ENCODE measurements at regions of chr2 and their contacts with region 1.

Region 1: DNA sequence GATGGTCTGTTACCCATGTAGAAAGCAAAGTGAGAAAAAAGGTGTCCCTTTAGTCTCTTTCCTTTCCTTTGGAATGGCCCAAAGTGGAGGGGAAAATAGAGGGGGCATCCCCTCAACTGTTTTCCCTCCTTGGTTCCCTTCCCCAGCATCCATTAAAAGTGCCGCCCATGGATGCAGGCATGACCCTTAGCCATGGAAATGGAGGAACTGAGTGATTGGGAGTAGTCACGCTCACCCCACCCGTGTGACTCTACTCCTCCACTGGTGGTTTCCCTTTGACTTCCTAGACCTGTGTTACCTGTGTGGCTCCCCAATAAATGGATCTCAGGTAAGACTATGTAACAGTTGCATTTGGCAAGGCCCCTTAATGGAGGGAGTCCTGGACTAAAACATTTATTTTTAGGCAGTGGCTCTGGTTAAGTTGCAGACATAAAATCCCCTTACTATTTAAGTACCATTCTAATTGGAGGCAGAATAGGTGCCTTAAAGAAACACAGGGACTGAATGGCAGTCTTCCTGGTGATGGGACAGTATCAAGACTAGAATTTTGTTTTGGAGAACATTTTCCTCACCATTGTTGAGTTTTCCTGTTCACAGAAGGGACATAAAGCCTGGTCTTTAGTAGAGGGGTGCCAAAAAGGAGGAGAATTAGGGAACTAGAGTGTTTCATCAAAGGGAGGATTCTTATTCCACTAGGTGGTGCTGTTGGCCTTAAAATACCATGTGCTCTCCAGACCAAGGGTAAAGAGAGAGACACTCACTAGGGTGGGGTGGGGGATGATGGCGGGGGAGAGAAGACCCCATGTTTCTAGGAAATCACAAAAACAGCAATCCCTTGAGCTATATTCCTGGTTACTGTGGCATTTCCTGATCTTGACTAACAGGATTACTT is 25.7 kb upstream of the PLA2R1 start:
- DNase-seq: peak; percentile 35 to 62
- ATAC-seq: peak; percentile 92 to 93
- H3K4me3 ChIP-seq: no peak overlapping the region
- H3K27ac ChIP-seq: peak overlapping the region; percentile 0 to 67; a peak in 3 of 6 replicates
- H3K4me1 ChIP-seq: peaks cover 10% of the 10 kb centered on the region
- CTCF ChIP-seq: peak; percentile 86
- EP300 ChIP-seq: no peak
- POLR2A ChIP-seq: no peak
- RAD21 ChIP-seq: peak; percentile 90 to 92

Region 2: DNA sequence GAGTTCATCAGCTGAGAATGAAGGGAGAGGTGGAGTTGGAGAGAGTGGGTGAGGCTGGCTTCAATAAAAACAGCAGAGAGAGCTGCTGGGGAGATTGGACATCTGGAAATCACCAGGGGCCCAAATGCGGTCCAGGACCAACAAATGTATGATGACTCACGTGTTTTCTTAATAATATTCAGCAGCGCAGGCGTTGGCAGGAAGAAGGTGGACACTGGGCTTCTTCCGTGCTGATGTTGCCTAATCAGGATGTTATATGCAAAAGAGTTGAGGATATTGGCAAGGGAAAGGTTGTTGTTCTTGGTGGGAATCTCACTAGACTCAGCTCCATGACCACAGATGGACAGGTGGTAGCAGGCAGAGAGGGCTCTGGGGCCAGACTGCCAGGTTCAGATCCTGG is 12.9 kb before region 1 on chr2:
- CTCF ChIA-PET with region 1: interaction called, 28 read pairs
- POLR2A ChIA-PET with region 1: no interaction called
- DNase-seq: peak in 1 of 2 experiments; percentile 13
- ATAC-seq: peak in 1 of 2 experiments; percentile 12; a peak in 1 of 6 replicates
- H3K4me3 ChIP-seq: no peak overlapping the region
- H3K27ac ChIP-seq: no peak overlapping the region
- H3K4me1 ChIP-seq: peaks cover 14% of the 10 kb centered on the region; the same call in 2 of the 3 replicates
- CTCF ChIP-seq: no peak
- EP300 ChIP-seq: no peak
- POLR2A ChIP-seq: no peak
- RAD21 ChIP-seq: no peak

Region 3: GRCh38 chr2:160102021-160102760 is 14.1 kb after region 1 on chr2:
- CTCF ChIA-PET with region 1: interaction called, 13 read pairs
- POLR2A ChIA-PET with region 1: no interaction called
- DNase-seq: no peak
- ATAC-seq: no peak
- H3K4me3 ChIP-seq: no peak overlapping the region
- H3K27ac ChIP-seq: no peak overlapping the region
- H3K4me1 ChIP-seq: no peaks in the 10 kb centered on the region
- CTCF ChIP-seq: no peak
- EP300 ChIP-seq: no peak
- POLR2A ChIP-seq: no peak
- RAD21 ChIP-seq: no peak

Measured in A549 (cell line).